ENCODE measurements at regions of chr2 and their contacts with region 1.

Region 1: GRCh38 chr2:118882709-118883210 is 35.3 kb upstream of the EN1 start:
- DNase-seq: no peak
- H3K4me3 ChIP-seq: peak overlapping the region in 3 of 4 donors; percentile 14 to 57 (median 21)
- H3K27ac ChIP-seq: no peak overlapping the region
- H3K4me1 ChIP-seq: peaks cover 3 to 6% (median 6%) of the 10 kb centered on the region in 3 donors
- H3K27me3 ChIP-seq: peaks cover 0 to 45% (median 0%) of the 10 kb centered on the region in 4 donors
- CTCF ChIP-seq: peak; percentile 62 to 92 (median 75)
- POLR2A ChIP-seq: no peak

Region 2: GRCh38 chr2:119011162-119011909 is 128.6 kb after region 1 on chr2:
- intact Hi-C with region 1: loop called (anchors 10 kb)
- DNase-seq: no peak
- H3K4me3 ChIP-seq: peak overlapping the region in 1 of 4 donors; percentile 21
- H3K27ac ChIP-seq: no peak overlapping the region
- H3K4me1 ChIP-seq: peaks cover 0 to 6% (median 0%) of the 10 kb centered on the region in 3 donors
- H3K27me3 ChIP-seq: peaks cover 0 to 58% (median 0%) of the 10 kb centered on the region in 4 donors
- CTCF ChIP-seq: peak in 5 of 6 experiments; percentile 22 to 50 (median 27)
- POLR2A ChIP-seq: no peak

Region 3: DNA sequence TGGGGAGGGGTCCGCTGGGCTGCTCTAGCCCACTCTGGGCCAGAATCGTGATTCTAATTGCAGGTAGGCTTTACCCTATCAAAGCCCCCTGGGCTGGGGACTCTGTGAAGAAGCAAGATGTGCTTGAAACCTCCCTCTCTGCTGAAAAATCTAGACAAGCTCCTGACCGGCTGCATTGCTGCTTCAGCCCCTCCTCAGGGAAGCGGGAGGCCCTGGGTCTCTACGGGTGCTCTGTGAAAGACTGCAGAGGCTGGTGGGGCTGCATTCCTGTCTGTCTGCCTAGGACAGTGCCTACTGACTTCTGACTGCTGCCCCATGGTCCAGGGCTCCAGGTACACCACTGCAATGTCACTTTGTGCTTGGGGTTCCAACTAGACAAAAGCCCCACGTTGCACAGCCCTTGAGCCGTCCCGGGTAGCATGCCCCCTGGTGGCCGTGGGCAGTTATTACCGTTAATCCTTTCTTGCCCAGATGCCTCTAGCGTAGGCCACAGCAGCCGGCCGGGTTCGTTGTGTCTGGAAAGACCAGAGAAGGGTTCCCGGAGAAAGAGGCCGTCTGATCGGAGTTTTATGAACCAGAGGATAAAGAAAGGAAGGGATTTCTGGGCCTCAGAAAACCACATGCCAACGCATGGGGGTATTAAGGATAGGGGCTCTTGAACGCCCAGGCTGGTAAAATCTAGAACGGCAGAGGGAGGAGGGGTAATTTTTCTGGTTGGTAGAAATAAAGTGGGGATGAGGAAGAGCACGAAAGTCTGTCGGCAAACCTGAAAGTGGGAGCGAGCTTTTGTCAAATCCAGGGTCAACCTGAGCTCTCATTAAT is 291.7 kb after region 1 on chr2:
- intact Hi-C with region 1: loop called (anchors 5 kb)
- DNase-seq: no peak
- H3K4me3 ChIP-seq: no peak overlapping the region
- H3K27ac ChIP-seq: no peak overlapping the region
- H3K4me1 ChIP-seq: no peaks in the 10 kb centered on the region
- H3K27me3 ChIP-seq: peaks cover 0 to 1% (median 0%) of the 10 kb centered on the region in 4 donors
- CTCF ChIP-seq: peak; percentile 34 to 69 (median 58)
- POLR2A ChIP-seq: no peak

Region 4: GRCh38 chr2:119283860-119284331 is 401.1 kb after region 1 on chr2:
- intact Hi-C with region 1: loop called (anchors 10 kb)
- DNase-seq: no peak
- H3K4me3 ChIP-seq: peak overlapping the region in 1 of 4 donors; percentile 2
- H3K27ac ChIP-seq: peak overlapping the region; percentile 62 to 78 (median 70)
- H3K4me1 ChIP-seq: peaks cover 11 to 26% (median 13%) of the 10 kb centered on the region in 3 donors
- H3K27me3 ChIP-seq: no peaks in the 10 kb centered on the region
- CTCF ChIP-seq: no peak
- POLR2A ChIP-seq: no peak

Region 5: GRCh38 chr2:119476301-119477021 is 593.7 kb after region 1 on chr2:
- intact Hi-C with region 1: loop called (anchors 10 kb)
- DNase-seq: no peak
- H3K4me3 ChIP-seq: no peak overlapping the region
- H3K27ac ChIP-seq: no peak overlapping the region
- H3K4me1 ChIP-seq: peaks cover 0 to 5% (median 0%) of the 10 kb centered on the region in 3 donors
- H3K27me3 ChIP-seq: peaks cover 0 to 15% (median 0%) of the 10 kb centered on the region in 4 donors
- CTCF ChIP-seq: peak; percentile 80 to 98 (median 89)
- POLR2A ChIP-seq: no peak